Activated CD4-positive, alpha-beta T cell treated with anti-CD3 and anti-CD28 coated beads, Interleukin-2, amount 10 ng/mL, durations not matched to agents 24 days and 14 days (primary cell): ENCODE measurements at regions of chr2 and their contacts with region 1.

Region 1: DNA sequence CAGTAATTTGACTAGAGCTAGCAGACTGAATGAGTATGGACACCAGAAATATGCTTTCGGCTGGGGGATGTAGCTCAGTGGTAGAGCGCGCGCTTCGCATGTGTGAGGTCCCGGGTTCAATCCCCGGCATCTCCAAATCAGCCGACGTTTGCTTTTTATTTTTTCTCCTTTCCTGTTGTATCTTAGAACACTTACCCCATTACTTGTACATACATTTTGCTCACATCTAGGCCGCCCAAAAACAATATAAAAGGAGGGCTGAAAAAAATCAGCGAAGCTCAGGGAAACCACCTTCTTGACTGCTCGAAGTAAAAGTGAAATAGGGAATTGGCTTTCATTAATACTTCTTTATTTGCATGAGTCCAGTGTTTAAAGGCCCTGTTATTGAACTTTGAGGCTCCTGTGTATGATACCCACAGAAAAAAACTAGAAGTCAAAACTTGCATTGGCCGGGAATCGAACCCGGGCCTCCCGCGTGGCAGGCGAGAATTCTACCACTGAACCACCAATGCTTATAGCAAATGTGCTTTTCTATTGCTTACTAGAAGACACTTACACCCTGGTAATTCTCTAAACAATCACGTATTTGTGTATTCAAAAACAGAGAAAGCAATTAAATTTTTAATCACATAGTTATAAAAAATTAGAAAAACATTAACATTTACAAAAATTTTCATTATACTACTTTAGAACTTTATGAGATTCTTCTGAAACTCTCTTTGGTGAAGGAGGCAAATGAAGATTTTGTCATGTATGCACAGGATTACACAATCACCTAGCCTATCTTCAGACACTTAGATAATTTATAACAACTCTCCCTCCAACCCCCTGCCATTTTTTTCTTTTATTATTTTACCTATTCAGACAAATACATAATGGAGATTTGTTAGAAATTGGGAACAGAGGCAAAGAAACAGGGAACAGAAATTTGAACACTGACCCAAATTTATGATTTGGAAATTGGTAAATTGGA is 35.2 kb upstream of the GPD2 start:
- DNase-seq: peak; percentile 94
- H3K4me3 Mint-ChIP-seq: peak overlapping the region; percentile 92
- H3K27ac Mint-ChIP-seq: peak overlapping the region; percentile 96
- H3K4me1 Mint-ChIP-seq: peaks cover 36% of the 10 kb centered on the region
- H3K27me3 Mint-ChIP-seq: peaks cover 5% of the 10 kb centered on the region

Region 2: GRCh38 chr2:155377266-155377680 is 1023.7 kb before region 1 on chr2:
- intact Hi-C with region 1: loop called (anchors 5 kb)
- DNase-seq: no peak
- H3K4me3 Mint-ChIP-seq: no peak overlapping the region
- H3K27ac Mint-ChIP-seq: peak overlapping the region; percentile 36
- H3K4me1 Mint-ChIP-seq: peaks cover 8% of the 10 kb centered on the region
- H3K27me3 Mint-ChIP-seq: no peaks in the 10 kb centered on the region

Region 3: DNA sequence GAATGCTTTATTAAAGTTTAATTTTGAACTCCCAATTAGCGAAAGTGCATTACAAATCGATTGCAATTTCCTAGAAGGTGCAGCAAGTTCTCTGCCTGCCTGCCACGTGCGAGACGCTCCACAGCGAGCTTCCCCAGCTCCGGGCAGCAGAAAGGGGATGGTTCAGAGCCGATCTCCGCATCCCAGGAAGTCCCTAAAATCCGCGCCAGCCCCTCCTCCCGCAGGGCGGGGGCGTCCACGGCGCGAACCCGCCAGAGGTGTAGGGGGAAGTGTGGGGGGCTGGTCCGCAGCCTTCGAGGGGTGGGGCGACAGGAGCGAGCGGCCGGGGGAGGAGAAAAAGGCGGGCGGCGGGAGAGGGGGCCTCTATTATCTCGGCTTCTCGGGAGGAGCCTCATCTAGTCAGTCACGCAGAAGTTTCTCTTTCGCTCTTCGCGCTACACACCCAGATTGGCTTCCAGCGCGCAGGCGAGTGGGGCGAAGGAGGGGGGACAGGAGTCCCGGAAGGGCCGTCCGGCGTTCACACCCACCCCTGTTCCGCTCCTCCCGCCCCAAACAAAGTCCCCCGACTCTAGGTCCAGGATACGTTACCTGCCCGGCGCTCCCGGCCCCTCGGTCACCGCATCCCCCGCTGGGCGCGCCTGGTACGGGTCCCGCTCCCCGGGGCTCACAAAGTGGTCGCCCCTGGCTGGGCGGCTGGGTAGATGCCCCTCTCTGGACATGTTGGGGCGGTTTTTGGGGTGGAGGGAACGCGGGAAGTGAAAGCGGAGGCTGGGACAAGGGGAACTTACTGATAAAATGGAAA is 59.3 kb before region 1 on chr2:
- intact Hi-C with region 1: loop called (anchors 1 kb)
- DNase-seq: peak; percentile 96
- H3K4me3 Mint-ChIP-seq: peak overlapping the region; percentile 93
- H3K27ac Mint-ChIP-seq: peak overlapping the region; percentile 99
- H3K4me1 Mint-ChIP-seq: peaks cover 48% of the 10 kb centered on the region
- H3K27me3 Mint-ChIP-seq: no peaks in the 10 kb centered on the region

Region 4: DNA sequence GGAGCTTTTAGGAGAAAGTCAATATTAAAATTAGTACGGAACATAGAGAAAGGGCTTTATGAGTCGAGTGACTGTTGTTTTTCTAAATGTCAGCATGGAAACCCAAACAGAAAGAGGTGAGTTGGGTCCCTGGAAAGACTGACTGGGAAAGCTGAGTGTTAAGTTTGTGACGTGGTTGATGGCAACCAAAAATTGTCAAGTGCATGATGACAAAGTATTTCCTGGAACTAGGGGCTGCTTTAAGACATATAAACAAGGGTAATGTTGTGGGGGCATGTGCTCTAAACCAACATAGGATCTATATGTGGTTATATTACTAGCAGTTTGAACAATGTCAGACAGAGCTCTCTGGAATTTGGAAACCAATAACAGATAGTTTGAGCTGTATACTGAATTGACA is 15.8 kb before region 1 on chr2:
- intact Hi-C with region 1: loop called (anchors 1 kb)
- DNase-seq: no peak
- H3K4me3 Mint-ChIP-seq: peak overlapping the region; percentile 3
- H3K27ac Mint-ChIP-seq: peak overlapping the region; percentile 78
- H3K4me1 Mint-ChIP-seq: peaks cover 37% of the 10 kb centered on the region
- H3K27me3 Mint-ChIP-seq: no peaks in the 10 kb centered on the region

Region 5: GRCh38 chr2:156411835-156412234 is 10.8 kb after region 1 on chr2:
- intact Hi-C with region 1: no loop called
- DNase-seq: no peak
- H3K4me3 Mint-ChIP-seq: no peak overlapping the region
- H3K27ac Mint-ChIP-seq: no peak overlapping the region
- H3K4me1 Mint-ChIP-seq: no peaks in the 10 kb centered on the region
- H3K27me3 Mint-ChIP-seq: peaks cover 19% of the 10 kb centered on the region

Region 6: GRCh38 chr2:156476850-156477206 is 75.8 kb after region 1 on chr2:
- intact Hi-C with region 1: loop called (anchors 2 kb)
- DNase-seq: peak; percentile 64
- H3K4me3 Mint-ChIP-seq: peak overlapping the region; percentile 57
- H3K27ac Mint-ChIP-seq: peak overlapping the region; percentile 76
- H3K4me1 Mint-ChIP-seq: peaks cover 46% of the 10 kb centered on the region
- H3K27me3 Mint-ChIP-seq: no peaks in the 10 kb centered on the region

Region 7: GRCh38 chr2:156892467-156893281 is 491.7 kb after region 1 on chr2:
- intact Hi-C with region 1: loop called (anchors 10 kb)
- DNase-seq: peak; percentile 66
- H3K4me3 Mint-ChIP-seq: peak overlapping the region; percentile 25
- H3K27ac Mint-ChIP-seq: no peak overlapping the region
- H3K4me1 Mint-ChIP-seq: peaks cover 33% of the 10 kb centered on the region
- H3K27me3 Mint-ChIP-seq: peaks cover 52% of the 10 kb centered on the region

Region 8: GRCh38 chr2:156908825-156909224 is 507.8 kb after region 1 on chr2:
- intact Hi-C with region 1: no loop called
- DNase-seq: no peak
- H3K4me3 Mint-ChIP-seq: no peak overlapping the region
- H3K27ac Mint-ChIP-seq: no peak overlapping the region
- H3K4me1 Mint-ChIP-seq: peaks cover 7% of the 10 kb centered on the region
- H3K27me3 Mint-ChIP-seq: peaks cover 26% of the 10 kb centered on the region